K562 (cell line): ENCODE measurements at regions of chr5 and their contacts with region 1.

Region 1: DNA sequence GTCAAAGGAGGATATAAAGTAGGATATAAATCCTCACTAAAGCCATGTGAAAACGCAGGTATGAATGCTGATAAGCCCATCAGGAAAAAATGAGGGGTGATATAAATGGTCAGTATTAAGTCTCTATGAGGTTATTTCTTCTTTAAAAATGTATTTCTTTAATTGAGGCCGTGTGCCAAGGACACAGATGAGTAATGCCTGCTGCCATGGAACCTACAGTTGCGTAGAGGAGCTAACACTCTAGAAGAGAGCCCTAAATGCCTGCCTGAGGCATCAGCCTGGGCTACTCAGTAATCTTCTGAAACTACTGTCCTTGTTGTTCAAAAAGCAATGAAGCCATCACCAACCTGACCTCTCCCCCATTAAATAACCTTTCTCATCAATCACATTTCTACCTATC is 84.9 kb downstream of the KLHL3 start:
- DNase-seq: no peak
- ATAC-seq: no peak
- H3K4me3 ChIP-seq: no peak overlapping the region
- H3K27ac ChIP-seq: no peak overlapping the region
- H3K4me1 ChIP-seq: no peaks in the 10 kb centered on the region
- H3K27me3 ChIP-seq: no peaks in the 10 kb centered on the region
- CTCF ChIP-seq: no peak
- EP300 ChIP-seq: no peak
- POLR2A ChIP-seq: no peak
- RAD21 ChIP-seq: no peak

Region 2: DNA sequence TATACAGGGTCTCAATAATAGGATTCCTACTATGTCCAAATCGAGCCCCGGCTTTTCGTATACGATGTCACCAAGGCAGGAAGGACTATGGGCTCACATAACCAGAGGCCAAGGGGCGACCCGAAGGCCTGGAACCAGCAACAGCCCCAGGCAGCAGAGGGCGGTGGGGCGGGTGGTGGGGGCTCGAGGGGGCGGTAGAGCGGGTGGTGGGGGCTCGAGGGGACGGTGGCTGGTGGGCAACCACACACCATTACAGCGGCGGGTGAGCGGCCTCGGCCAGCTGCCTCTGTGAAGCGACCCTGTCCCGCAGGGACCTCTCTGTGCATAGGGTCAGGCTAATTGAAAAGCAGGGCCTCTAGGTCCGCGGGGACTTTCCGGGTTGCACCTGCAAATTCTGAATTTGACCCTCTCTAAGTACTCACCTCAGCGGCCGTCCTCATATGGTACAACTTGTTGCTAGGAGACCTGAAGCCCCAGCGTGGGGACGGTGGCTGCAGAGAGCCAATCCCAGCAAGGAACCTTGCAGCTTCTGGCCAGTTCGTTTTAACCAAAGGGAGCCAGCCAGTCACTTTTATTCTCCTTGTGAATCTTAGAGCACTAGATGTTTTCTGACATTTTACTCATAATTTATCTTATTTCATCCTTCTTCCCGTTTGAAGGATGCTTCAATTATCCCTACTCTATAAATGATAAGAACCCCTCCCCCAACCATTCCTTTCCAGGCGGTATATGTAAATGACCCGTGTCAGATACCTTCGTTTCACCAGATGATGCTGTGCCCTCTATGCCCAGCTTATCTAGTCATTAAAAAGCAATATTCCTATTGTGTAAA is 488.1 kb after region 1 on chr5 and contains the start of gene NME5:
- CTCF ChIA-PET with region 1: no interaction called
- POLR2A ChIA-PET with region 1: no interaction called
- in situ Hi-C with region 1: loop called (anchors 10 kb)
- intact Hi-C with region 1: loop called (anchors 5 kb)
- DNase-seq: peak in 1 of 4 experiments; percentile 16
- ATAC-seq: peak; percentile 32; the same call in 1 of the 3 replicates
- H3K4me3 ChIP-seq: no peak within 1 kb of the TSS
- H3K27ac ChIP-seq: no peak within 1 kb of the TSS
- H3K4me1 ChIP-seq: no peaks in the 10 kb centered on the region
- H3K27me3 ChIP-seq: peaks cover 18 to 27% of the 10 kb centered on the region in 2 experiments; a peak in 4 of 5 replicates
- CTCF ChIP-seq: no peak
- EP300 ChIP-seq: no peak
- POLR2A ChIP-seq: no peak
- RAD21 ChIP-seq: no peak
- polyA plus RNA-seq, gene NME5: not detected